Mucosa of descending colon (tissue), 3 donors: ENCODE measurements at regions of chr19 and their contacts with region 1.

Region 1: DNA sequence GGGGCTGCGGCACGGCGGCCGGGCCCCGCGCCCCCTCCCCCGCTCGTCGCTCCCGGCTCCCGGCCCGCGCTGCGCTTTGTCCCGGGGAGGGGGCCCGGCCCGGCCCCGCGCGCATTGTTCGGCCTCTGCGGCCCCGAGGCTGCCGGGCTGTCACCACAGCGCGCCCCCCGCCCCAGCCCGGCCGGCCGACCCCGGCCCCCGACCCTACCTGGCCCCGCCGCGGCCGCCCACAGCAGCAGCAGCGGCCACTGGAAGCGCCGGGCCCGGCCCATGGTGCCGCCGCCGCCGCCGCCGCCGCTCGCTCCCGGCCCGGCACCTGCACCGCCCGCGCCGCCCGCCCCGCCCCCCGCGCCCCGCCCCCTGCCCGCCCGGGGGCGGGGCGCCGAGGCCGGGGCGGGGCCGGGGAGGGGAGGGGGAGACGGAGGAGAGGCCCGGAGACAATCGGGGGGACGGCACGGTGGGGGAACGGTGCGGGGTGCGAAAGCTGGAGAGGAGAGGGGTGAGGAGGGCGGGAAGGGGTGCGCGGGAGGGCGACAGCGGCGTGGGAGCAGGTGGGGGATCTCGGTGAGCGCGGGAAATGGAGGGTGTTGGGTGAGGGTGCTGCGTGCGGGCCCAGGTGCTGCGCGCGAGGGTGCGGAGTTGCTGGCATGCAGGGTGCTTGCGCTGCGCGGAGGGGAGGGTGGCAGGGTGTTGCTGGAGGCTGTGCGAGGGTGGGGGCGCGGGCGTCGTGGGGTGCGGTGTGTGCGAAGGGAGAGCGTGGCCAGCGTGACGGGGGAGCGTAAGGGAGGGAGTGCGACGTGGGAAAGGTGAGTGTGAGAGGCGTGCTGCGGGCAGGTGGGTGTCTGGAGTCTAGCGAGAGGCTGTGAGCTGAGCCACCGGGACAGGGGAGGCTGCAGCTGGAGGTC is at the start of gene CADM4:
- DNase-seq: peak; percentile 43 to 71 (median 65)
- ATAC-seq: peak; percentile 89
- H3K4me3 ChIP-seq: no peak within 1 kb of the TSS
- H3K4me1 ChIP-seq: peaks cover 6% of the 10 kb centered on the region
- CTCF ChIP-seq: no peak
- total RNA-seq, gene CADM4: 1.2 to 26.2 (median 3.4) TPM

Region 2: GRCh38 chr19:43555185-43555770 is 84.5 kb before region 1 on chr19:
- intact Hi-C with region 1: loop called in 1 of 2 experiments (anchors 10 kb)
- DNase-seq: peak in 2 of 3 donors; percentile 78 to 91
- ATAC-seq: peak; percentile 90
- H3K4me3 ChIP-seq: no peak overlapping the region
- H3K4me1 ChIP-seq: no peaks in the 10 kb centered on the region
- CTCF ChIP-seq: peak; percentile 71